ENCODE measurements at regions of chr7 and their contacts with region 1.

Region 1: GRCh38 chr7:116290740-116291139 is 80.4 kb downstream of the TES start:
- DNase-seq: no peak
- H3K4me3 Mint-ChIP-seq: no peak overlapping the region
- H3K27ac Mint-ChIP-seq: no peak overlapping the region
- H3K4me1 Mint-ChIP-seq: peaks cover 14% of the 10 kb centered on the region
- H3K27me3 Mint-ChIP-seq: no peaks in the 10 kb centered on the region
- CTCF ChIP-seq: no peak

Region 2: GRCh38 chr7:116150588-116150987 is 140.2 kb before region 1 on chr7:
- CTCF ChIA-PET with region 1: no interaction called
- intact Hi-C with region 1: no loop called
- DNase-seq: no peak
- H3K4me3 Mint-ChIP-seq: no peak overlapping the region
- H3K27ac Mint-ChIP-seq: no peak overlapping the region
- H3K4me1 Mint-ChIP-seq: no peaks in the 10 kb centered on the region
- H3K27me3 Mint-ChIP-seq: no peaks in the 10 kb centered on the region
- CTCF ChIP-seq: no peak

Region 3: GRCh38 chr7:116305485-116306408 is 15.0 kb after region 1 on chr7:
- CTCF ChIA-PET with region 1: no interaction called
- intact Hi-C with region 1: loop called (anchors 1 kb)
- DNase-seq: no peak
- H3K4me3 Mint-ChIP-seq: no peak overlapping the region
- H3K27ac Mint-ChIP-seq: no peak overlapping the region
- H3K4me1 Mint-ChIP-seq: peaks cover 8% of the 10 kb centered on the region
- H3K27me3 Mint-ChIP-seq: no peaks in the 10 kb centered on the region
- CTCF ChIP-seq: no peak

Measured in Calu3 (cell line).